Right cardiac atrium (tissue), 5 donors: ENCODE measurements at regions of chr20 and their contacts with region 1.

Region 1: GRCh38 chr20:50663095-50663850 is 28.1 kb downstream of the RIPOR3 start:
- DNase-seq: no peak
- ATAC-seq: no peak
- H3K4me3 ChIP-seq: no peak overlapping the region
- H3K27ac ChIP-seq: peak overlapping the region; percentile 9
- H3K4me1 ChIP-seq: peaks cover 12% of the 10 kb centered on the region
- H3K27me3 ChIP-seq: no peaks in the 10 kb centered on the region

Region 2: GRCh38 chr20:50713657-50714101 is 50.4 kb after region 1 on chr20:
- intact Hi-C with region 1: loop called in 1 of 4 experiments (anchors 10 kb)
- DNase-seq: no peak
- ATAC-seq: peak; percentile 55 to 57
- H3K4me3 ChIP-seq: no peak overlapping the region
- H3K27ac ChIP-seq: no peak overlapping the region
- H3K4me1 ChIP-seq: no peaks in the 10 kb centered on the region
- H3K27me3 ChIP-seq: no peaks in the 10 kb centered on the region

Region 3: DNA sequence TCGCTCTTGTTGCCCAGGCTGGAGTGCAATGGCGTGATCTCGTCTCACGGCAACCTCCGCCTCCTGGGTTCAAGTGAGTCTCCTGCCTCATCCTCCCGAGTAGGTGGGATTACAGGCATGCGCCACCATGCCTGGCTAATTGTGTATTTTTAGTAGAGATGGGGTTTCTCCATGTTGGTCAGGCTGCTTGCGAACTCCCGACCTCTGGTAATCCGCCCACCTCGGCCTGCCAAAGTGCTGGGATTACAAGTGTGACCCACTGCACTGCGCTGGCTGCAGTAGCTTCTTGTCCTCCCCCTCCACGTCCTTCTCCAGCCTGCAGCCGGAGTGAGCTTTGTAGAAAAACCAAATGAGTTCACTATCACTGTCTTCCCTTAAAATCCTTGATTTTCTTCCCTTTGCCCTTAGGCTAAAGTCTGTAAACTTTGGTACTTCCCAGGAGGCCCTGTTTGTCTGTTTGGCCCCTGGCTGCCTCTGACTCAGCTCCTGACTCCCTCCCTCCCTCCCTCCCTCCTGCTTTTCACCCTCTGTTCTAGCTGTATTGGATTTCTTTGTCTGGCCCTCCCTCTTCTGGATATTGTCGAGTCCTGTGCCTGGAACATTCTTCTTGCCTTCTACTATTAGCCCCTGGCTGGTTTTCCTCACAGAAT is 81.0 kb after region 1 on chr20:
- intact Hi-C with region 1: no loop called
- DNase-seq: peak; percentile 59 to 85 (median 76)
- ATAC-seq: peak; percentile 90 to 91
- H3K4me3 ChIP-seq: no peak overlapping the region
- H3K27ac ChIP-seq: peak overlapping the region; percentile 98
- H3K4me1 ChIP-seq: no peaks in the 10 kb centered on the region
- H3K27me3 ChIP-seq: no peaks in the 10 kb centered on the region

Region 4: DNA sequence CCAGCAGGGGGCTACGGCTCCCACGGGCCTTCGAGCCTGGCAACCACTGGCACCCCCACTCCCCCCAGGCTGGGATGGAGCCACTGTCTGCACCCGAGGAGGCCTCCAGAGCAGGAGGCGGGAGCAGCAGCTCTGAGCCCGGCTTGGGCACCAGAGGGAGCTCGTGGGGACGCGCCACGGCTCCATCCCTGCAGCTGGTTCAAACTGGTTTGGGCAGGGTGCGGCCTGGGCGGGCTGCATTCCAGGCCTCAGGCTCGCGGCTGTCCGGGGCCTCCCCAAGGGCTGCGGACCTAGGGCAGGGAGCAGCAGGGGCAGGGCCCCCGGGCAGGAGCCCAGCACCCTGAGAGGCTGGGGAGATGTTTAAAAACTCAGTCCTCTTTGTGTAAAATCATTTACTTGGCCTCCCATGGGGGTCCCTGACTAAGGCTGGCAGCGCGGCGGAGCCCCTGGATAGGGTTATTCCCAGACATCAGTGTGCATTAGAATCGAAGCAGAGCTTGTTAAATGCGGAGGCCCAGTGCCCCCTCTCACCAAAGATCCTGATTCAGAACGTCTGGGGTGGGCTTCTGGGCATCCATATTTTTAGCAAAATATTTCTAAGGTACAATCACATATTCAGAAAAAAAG is 127.5 kb after region 1 on chr20:
- intact Hi-C with region 1: no loop called
- DNase-seq: peak; percentile 89 to 96 (median 96)
- ATAC-seq: peak; percentile 91 to 93
- H3K4me3 ChIP-seq: no peak overlapping the region
- H3K27ac ChIP-seq: peak overlapping the region; percentile 7
- H3K4me1 ChIP-seq: no peaks in the 10 kb centered on the region
- H3K27me3 ChIP-seq: no peaks in the 10 kb centered on the region

Region 5: DNA sequence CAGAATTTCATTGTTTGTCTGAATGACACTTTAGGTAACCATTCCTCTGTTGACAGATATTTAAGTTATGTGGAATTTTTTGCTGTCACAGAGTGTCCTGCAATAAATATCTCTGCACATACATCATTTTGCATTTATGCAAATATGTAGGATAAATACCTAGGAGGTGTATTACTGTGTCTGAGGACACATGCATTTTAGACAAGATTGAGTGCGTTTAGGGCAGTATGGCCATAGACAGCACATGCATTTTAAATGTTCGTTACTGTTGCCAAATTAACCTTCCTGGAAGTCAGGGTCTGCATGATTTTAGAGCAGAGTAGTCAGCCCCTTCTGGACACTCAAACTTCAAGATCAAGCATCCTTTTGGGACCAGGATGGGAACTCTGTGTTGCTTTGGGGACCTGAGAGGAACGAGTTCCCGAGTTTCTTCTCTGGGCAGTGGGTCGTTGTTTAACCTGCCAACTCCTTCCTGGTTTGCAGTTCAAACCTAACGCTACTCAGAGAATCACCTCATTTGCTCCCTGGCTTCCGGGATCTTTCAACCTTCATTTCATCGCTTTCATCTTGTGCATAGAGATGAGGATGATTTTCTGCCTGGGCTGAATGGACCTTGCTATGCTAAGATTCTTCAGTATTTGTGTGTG is 141.3 kb after region 1 on chr20:
- intact Hi-C with region 1: no loop called
- DNase-seq: no peak
- ATAC-seq: no peak
- H3K4me3 ChIP-seq: no peak overlapping the region
- H3K27ac ChIP-seq: no peak overlapping the region
- H3K4me1 ChIP-seq: no peaks in the 10 kb centered on the region
- H3K27me3 ChIP-seq: no peaks in the 10 kb centered on the region